ENCODE measurements at regions of chr1 and their contacts with region 1.

Region 1: DNA sequence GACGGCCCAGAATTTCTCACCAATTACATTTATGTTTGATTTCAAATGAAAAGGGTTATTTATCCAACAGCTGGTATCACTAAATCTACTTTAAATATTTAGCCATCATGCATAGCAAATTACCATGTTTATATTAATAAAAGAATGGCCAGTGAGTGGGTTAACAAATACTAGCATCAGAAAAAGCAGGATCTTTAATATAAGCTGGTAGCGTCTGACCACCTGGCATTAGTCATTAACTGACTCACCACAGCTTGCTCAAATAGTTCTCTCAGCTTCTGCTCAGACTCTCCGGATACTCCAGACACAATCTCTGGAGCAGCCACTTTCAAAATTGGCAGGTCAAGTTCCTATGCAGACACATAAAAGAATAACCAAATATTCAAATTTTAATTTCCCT is 29.7 kb downstream of the NVL start:
- DNase-seq: no peak

Region 2: GRCh38 chr1:223233410-223234169 is 1066.7 kb before region 1 on chr1:
- intact Hi-C with region 1: no loop called
- DNase-seq: no peak

Region 3: DNA sequence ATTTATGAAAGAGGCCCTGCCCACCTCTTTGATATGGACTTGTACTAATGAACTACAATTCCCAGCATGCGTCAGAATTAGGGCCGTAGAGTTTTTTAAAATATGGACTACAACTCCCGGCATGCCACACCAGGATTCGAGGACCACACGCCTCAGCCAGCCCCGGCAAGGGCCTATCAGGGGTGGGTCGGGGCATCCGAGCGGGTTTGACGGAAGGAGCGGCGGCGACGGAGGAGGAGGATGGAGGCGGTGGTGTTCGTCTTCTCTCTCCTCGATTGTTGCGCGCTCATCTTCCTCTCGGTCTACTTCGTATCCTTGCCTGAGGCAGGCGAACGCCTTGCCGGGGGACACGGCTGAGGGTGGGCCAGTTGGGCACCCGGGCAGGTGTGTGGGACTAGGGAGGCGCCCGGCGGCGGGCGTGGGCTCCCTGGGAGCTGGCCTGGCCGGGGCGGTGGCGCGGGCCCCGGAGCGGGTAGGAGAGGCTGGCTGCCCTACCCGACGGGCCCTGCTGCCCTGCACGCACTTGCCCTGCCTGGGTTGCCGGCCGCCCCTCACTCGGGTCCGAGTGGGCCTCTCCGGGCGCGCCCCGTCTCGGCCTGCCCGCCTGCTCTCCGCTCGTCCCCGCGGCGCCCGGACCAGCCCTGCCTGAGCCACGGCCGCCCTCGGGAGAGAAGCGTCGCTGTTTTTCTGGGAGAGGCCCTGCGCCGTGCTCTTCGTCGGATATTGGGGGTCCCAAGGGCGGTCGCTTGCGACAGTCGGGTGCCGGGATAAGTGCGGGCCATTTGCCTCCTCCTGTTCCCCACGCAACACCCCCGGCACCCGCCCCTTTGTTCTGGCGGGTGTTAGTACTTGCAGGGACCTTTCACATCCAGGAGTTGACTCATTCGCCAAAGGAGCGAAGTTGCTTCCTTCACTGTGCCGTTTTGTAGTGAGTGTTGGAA is 56.6 kb after region 1 on chr1 and contains the start of gene CNIH4:
- intact Hi-C with region 1: loop called in 1 of 2 experiments (anchors 2 kb)
- DNase-seq: peak; percentile 97
- total RNA-seq, gene CNIH4: 62.2 to 77.7 TPM

Measured in posterior vena cava (tissue), 2 donors.